CD8-positive, alpha-beta memory T cell (primary cell): ENCODE measurements at regions of chr1 and their contacts with region 1.

Region 1: DNA sequence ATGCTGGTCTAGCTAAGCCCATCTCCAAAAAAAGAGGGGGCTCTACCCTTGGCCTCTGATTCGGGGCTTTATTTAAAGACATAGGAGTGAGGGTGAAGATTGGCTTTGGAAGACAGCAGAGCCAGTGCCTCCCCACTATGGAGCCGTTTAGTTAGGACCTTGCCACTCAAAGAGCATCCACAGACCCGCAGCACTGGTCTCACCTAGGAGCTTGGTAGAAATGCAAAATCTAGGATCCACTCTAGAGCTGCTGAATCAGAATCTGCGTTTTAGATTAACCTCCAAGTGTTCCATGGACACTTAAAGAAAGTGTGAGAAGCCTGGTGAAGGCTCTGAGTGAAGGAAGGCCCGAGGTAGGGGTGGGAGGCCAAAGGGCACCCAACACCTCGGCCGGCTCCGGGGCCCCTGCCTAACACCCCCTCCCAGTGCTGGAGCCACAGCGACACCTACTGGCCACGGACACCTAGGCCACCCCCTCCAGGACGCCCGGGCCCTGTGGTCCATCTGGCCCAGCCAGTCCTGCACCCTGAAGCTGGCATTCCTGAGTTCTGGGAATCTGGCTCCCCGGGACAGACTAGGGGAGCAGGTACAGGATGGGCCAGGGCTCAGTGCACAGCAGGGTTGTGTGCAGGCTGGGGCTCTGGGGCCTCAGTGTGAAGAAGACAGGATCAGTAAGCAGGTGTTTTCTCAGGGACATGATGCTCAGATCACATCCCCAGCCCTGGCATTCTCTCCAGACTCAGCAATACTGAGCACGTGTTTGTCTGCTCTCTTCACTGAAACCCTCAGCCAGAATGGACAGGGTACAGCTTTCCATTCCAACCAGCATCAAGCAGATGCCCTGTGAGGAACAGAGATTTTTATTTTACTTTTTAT is 79.2 kb downstream of the TMEM53 start:
- DNase-seq: peak; percentile 41 to 78 (median 64)
- H3K4me3 ChIP-seq: no peak overlapping the region
- H3K4me3 Mint-ChIP-seq: no peak overlapping the region
- H3K27ac ChIP-seq: no peak overlapping the region
- H3K27ac Mint-ChIP-seq: no peak overlapping the region
- H3K4me1 ChIP-seq: no peaks in the 10 kb centered on the region
- H3K4me1 Mint-ChIP-seq: no peaks in the 10 kb centered on the region
- H3K27me3 ChIP-seq: no peaks in the 10 kb centered on the region
- H3K27me3 Mint-ChIP-seq: peaks cover 3 to 11% of the 10 kb centered on the region in 2 donors

Region 2: GRCh38 chr1:44377925-44378784 is 217.0 kb before region 1 on chr1:
- CTCF ChIA-PET with region 1: interaction called, 13 read pairs
- POLR2A ChIA-PET with region 1: no interaction called
- DNase-seq: peak; percentile 7 to 57 (median 11)
- H3K4me3 ChIP-seq: no peak overlapping the region
- H3K4me3 Mint-ChIP-seq: no peak overlapping the region
- H3K27ac ChIP-seq: no peak overlapping the region
- H3K27ac Mint-ChIP-seq: no peak overlapping the region
- H3K4me1 ChIP-seq: no peaks in the 10 kb centered on the region
- H3K4me1 Mint-ChIP-seq: no peaks in the 10 kb centered on the region
- H3K27me3 ChIP-seq: no peaks in the 10 kb centered on the region
- H3K27me3 Mint-ChIP-seq: peaks cover 0 to 9% of the 10 kb centered on the region in 2 donors

Region 3: DNA sequence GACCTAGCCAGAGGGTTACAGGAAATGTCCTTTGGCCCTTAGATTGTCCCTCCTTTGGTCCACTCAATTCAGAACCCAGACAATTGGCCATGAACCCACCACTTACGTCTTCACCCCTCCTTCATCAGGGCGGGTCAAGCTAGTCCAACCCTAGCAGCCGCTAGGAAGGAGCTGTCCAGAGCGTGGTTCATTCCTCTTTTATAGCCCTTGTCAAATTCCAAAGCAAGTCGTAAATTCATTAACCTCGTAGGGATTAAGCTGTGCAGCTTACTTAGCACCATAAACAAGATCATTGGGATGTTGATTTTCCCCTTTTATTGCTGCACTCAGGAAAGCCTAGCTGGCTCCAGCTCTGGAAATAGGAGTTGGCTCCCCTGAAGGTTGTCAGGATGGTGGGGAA is 10.9 kb before region 1 on chr1:
- CTCF ChIA-PET with region 1: interaction called, 11 read pairs
- POLR2A ChIA-PET with region 1: no interaction called
- DNase-seq: no peak
- H3K4me3 ChIP-seq: no peak overlapping the region
- H3K4me3 Mint-ChIP-seq: no peak overlapping the region
- H3K27ac ChIP-seq: no peak overlapping the region
- H3K27ac Mint-ChIP-seq: no peak overlapping the region
- H3K4me1 ChIP-seq: no peaks in the 10 kb centered on the region
- H3K4me1 Mint-ChIP-seq: no peaks in the 10 kb centered on the region
- H3K27me3 ChIP-seq: no peaks in the 10 kb centered on the region
- H3K27me3 Mint-ChIP-seq: peaks cover 6 to 16% of the 10 kb centered on the region in 2 donors

Region 4: GRCh38 chr1:44684525-44684924 is 89.4 kb after region 1 on chr1:
- CTCF ChIA-PET with region 1: no interaction called
- POLR2A ChIA-PET with region 1: no interaction called
- DNase-seq: no peak
- H3K4me3 ChIP-seq: no peak overlapping the region
- H3K4me3 Mint-ChIP-seq: no peak overlapping the region
- H3K27ac ChIP-seq: no peak overlapping the region
- H3K27ac Mint-ChIP-seq: peak overlapping the region in 1 of 8 donors; percentile 82
- H3K4me1 ChIP-seq: no peaks in the 10 kb centered on the region
- H3K4me1 Mint-ChIP-seq: no peaks in the 10 kb centered on the region
- H3K27me3 ChIP-seq: no peaks in the 10 kb centered on the region
- H3K27me3 Mint-ChIP-seq: peaks cover 0 to 3% of the 10 kb centered on the region in 2 donors

Region 5: DNA sequence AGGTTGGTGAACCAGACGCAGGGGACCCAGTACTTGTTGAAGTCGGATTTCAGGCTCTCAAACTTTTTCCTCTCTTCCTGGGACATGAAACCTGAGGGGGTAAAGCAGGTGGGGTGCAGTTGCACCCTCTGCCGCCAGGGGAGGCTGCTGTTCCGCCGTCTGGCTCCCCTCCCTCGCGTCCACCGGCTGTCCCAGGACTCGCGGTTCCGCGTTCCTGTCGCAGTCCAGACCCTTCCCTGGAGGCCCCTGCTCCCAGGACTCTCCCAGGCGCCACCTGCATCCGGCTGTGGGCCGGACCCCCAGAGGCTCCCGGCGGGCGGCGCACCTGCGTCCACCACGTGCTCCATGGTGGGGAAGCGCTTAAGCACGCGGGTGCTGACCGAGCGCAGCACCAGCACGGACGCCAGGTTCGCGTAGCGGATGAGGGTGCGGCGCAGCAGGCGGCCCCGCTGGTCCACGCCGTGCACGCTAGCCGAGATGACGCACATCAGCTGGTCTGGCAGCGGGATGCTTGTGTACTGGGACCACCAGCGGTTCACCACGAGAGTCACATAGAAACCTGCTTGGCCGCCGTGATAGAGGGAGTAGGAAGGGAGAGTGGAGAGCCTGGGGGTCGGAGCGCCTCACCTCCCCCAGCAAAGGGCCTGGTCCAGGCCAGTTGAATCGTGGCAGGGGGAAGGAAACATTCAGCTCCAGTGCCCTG is 191.2 kb after region 1 on chr1:
- CTCF ChIA-PET with region 1: no interaction called
- POLR2A ChIA-PET with region 1: no interaction called
- DNase-seq: peak; percentile 71 to 83 (median 77)
- H3K4me3 ChIP-seq: peak overlapping the region; percentile 74
- H3K4me3 Mint-ChIP-seq: peak overlapping the region; percentile 76 to 93 (median 81)
- H3K27ac ChIP-seq: no peak overlapping the region
- H3K27ac Mint-ChIP-seq: peak overlapping the region; percentile 77 to 98 (median 87)
- H3K4me1 ChIP-seq: peaks cover 29% of the 10 kb centered on the region
- H3K4me1 Mint-ChIP-seq: peaks cover 27 to 36% (median 30%) of the 10 kb centered on the region in 3 donors
- H3K27me3 ChIP-seq: no peaks in the 10 kb centered on the region
- H3K27me3 Mint-ChIP-seq: no peaks in the 10 kb centered on the region